HEK293 (cell line): ENCODE measurements at regions of chr1 and their contacts with region 1.

Region 1: DNA sequence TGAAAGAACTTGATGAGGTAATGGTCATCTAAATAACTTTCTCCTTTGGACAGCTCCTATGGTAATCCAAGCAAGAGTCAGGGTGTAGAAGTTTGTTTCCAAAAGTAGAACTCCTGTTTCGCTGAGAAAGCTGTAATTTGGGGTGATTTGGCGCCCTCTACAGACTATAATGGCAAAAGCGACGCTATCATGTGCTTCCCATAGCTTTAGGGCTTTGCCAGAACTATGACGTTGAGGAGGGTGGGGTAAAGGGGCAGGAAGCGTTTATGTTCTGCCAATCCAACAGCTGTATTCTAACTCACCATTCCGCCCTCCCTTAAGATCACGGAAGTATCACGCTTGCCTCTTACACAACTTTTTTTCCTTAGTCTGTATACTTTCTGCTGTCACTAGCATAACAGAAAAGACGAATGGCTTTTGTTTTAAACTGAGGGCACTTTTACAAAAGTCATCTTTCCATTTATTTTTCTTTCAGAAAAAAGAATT is at the start of gene FMO4:
- H3K4me3 ChIP-seq: peak within 1 kb of the TSS; percentile 23
- H3K27ac ChIP-seq: no peak within 1 kb of the TSS
- H3K4me1 ChIP-seq: no peaks in the 10 kb centered on the region
- CTCF ChIP-seq: peak; percentile 86

Region 2: DNA sequence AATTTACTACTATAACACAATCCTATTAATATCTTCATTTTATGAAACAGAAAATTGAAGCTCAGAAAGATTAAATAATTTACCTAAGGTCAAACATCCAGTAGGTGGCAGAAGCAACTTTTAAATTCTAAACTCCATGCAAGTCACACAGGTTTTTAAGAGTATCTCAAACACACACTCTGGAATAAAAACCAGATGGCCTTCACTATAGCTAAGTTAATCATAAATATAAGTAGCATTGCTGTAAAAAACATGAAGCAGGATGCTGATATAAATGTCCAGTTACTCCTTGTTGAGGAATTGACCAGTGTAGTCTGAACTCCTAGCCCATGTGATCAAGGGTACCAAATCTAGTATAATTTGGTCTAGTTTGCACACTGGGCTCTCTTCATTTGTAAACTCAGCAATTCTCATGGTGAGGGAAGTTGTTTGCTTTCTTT is 232.5 kb before region 1 on chr1:
- CTCF ChIA-PET with region 1: interaction called, 14 read pairs
- POLR2A ChIA-PET with region 1: no interaction called
- H3K4me3 ChIP-seq: no peak overlapping the region
- H3K27ac ChIP-seq: no peak overlapping the region
- H3K4me1 ChIP-seq: no peaks in the 10 kb centered on the region
- CTCF ChIP-seq: no peak

Region 3: GRCh38 chr1:171127501-171127900 is 186.4 kb before region 1 on chr1:
- CTCF ChIA-PET with region 1: no interaction called
- POLR2A ChIA-PET with region 1: no interaction called
- H3K4me3 ChIP-seq: no peak overlapping the region
- H3K27ac ChIP-seq: no peak overlapping the region
- H3K4me1 ChIP-seq: no peaks in the 10 kb centered on the region
- CTCF ChIP-seq: no peak

Region 4: GRCh38 chr1:171245458-171246064 is 68.3 kb before region 1 on chr1:
- CTCF ChIA-PET with region 1: interaction called, 41 read pairs
- POLR2A ChIA-PET with region 1: no interaction called
- H3K4me3 ChIP-seq: no peak overlapping the region
- H3K27ac ChIP-seq: no peak overlapping the region
- H3K4me1 ChIP-seq: no peaks in the 10 kb centered on the region
- CTCF ChIP-seq: 0 out of 2 replicates have a peak, but pooled peaks have one; percentile 26

Region 5: DNA sequence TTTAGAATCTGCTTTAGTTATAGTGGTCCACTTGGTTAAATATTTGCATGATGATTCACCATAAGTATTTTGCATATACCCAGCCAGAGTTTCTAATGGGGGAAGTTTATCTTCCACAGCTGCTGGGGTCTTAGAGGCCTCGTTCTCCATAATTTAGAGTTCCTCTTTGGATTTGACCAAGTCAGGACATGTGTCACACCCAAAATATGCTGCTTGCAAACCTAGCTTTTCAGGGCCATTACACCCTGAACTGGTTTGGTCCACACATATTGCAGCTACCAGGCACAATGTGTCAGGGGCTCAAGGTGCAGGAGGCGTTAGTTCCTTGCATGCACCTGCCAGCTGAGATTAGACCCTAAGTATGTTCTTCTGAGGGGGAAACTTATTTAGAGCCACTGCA is 17.0 kb before region 1 on chr1:
- CTCF ChIA-PET with region 1: interaction called, 10 read pairs
- POLR2A ChIA-PET with region 1: no interaction called
- H3K4me3 ChIP-seq: no peak overlapping the region
- H3K27ac ChIP-seq: no peak overlapping the region
- H3K4me1 ChIP-seq: no peaks in the 10 kb centered on the region
- CTCF ChIP-seq: no peak

Region 6: DNA sequence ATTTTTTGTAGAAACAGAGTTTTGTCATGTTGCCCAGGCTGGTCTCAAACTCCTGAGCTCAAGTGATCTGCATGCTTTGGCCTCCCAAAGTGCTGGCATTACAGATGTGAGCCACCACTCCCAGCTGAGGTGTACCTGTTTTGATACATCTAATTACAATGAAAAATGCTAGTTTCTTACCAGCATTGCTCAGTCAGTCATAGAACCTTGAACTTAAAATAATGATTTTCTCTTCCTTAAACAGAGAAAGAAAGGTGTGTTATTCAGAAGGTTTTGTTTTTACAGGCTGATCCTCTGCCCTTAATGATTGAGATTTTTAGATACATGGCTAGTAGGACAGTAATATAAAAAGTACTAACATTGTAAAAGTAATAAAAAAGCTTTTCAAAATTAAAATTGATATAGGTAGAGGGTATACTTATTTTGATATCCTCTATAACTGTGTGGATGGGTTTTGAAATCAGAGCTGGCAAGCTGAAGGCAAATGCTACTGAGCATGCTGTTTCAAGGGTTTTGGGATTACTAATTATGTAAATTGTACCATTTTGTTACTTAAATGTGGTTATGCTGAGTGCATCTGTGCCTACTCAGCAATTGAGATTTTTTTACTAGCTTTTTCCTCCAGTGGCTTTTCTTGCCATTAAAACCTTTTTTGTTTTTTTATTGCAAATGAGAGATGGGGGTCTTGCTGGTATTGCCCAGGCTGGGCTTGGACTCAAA is 187.6 kb after region 1 on chr1:
- CTCF ChIA-PET with region 1: no interaction called
- POLR2A ChIA-PET with region 1: no interaction called
- H3K4me3 ChIP-seq: no peak overlapping the region
- H3K27ac ChIP-seq: no peak overlapping the region
- H3K4me1 ChIP-seq: peaks cover 9% of the 10 kb centered on the region; the same call in 1 of the 2 replicates
- CTCF ChIP-seq: no peak

Region 7: DNA sequence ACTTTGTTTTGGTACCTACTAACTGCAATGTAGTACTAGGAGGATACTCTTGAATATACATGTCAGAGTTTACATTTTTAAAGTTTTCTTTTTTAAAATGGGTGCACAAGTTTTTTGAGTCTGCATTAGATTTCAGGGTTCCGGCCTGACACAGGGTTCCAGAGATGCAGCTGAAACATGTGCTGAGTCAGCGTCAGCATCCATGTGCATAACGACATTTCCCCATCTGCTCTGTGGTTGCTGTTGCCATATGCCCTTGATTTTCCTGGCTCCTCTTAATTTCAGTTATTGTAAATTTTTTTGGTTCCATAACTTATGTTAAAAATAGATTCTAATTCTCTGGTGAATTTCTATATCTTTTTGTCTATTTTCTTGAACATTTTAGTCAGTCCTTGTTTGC is 455.3 kb after region 1 on chr1:
- CTCF ChIA-PET with region 1: no interaction called
- POLR2A ChIA-PET with region 1: no interaction called
- H3K4me3 ChIP-seq: no peak overlapping the region
- H3K27ac ChIP-seq: no peak overlapping the region
- H3K4me1 ChIP-seq: no peaks in the 10 kb centered on the region
- CTCF ChIP-seq: no peak